CD4-positive, alpha-beta memory T cell (primary cell): ENCODE measurements at regions of chr1 and their contacts with region 1.

Region 1: GRCh38 chr1:150149271-150150132 is at the start of gene PLEKHO1:
- DNase-seq: peak; percentile 72 to 92 (median 79)
- H3K4me3 ChIP-seq: peak within 1 kb of the TSS; percentile 77 to 87
- H3K4me3 Mint-ChIP-seq: peak within 1 kb of the TSS; percentile 94 to 99 (median 98)
- H3K27ac ChIP-seq: peak within 1 kb of the TSS; percentile 81
- H3K27ac Mint-ChIP-seq: peak within 1 kb of the TSS; percentile 95 to 99 (median 98)
- H3K4me1 ChIP-seq: peaks cover 52% of the 10 kb centered on the region
- H3K4me1 Mint-ChIP-seq: peaks cover 53 to 83% (median 68%) of the 10 kb centered on the region in 4 donors
- H3K27me3 ChIP-seq: no peaks in the 10 kb centered on the region
- H3K27me3 Mint-ChIP-seq: no peaks in the 10 kb centered on the region
- total RNA-seq, gene PLEKHO1: 154 TPM

Region 2: GRCh38 chr1:150067184-150068036 is 82.1 kb before region 1 on chr1 and contains the start of gene VPS45:
- CTCF ChIA-PET with region 1: interaction called, 574 read pairs
- POLR2A ChIA-PET with region 1: interaction called, 100 read pairs
- intact Hi-C with region 1: loop called (anchors 1 kb)
- DNase-seq: peak; percentile 69 to 82 (median 75)
- H3K4me3 ChIP-seq: peak within 1 kb of the TSS; percentile 70 to 88
- H3K4me3 Mint-ChIP-seq: peak within 1 kb of the TSS; percentile 91 to 98 (median 96)
- H3K27ac ChIP-seq: peak within 1 kb of the TSS; percentile 65
- H3K27ac Mint-ChIP-seq: peak within 1 kb of the TSS; percentile 91 to 97 (median 94)
- H3K4me1 ChIP-seq: peaks cover 30% of the 10 kb centered on the region
- H3K4me1 Mint-ChIP-seq: peaks cover 27 to 42% (median 35%) of the 10 kb centered on the region in 4 donors
- H3K27me3 ChIP-seq: no peaks in the 10 kb centered on the region
- H3K27me3 Mint-ChIP-seq: no peaks in the 10 kb centered on the region
- total RNA-seq, gene VPS45: 32.1 to 38.5 TPM

Region 3: GRCh38 chr1:150093805-150094204 is 55.7 kb before region 1 on chr1:
- CTCF ChIA-PET with region 1: no interaction called
- POLR2A ChIA-PET with region 1: interaction called, 30 read pairs
- intact Hi-C with region 1: no loop called
- DNase-seq: no peak
- H3K4me3 ChIP-seq: no peak overlapping the region
- H3K4me3 Mint-ChIP-seq: no peak overlapping the region
- H3K27ac ChIP-seq: no peak overlapping the region
- H3K27ac Mint-ChIP-seq: peak overlapping the region in 2 of 7 donors; percentile 2 to 42
- H3K4me1 ChIP-seq: peaks cover 46% of the 10 kb centered on the region
- H3K4me1 Mint-ChIP-seq: peaks cover 22 to 36% (median 25%) of the 10 kb centered on the region in 4 donors
- H3K27me3 ChIP-seq: no peaks in the 10 kb centered on the region
- H3K27me3 Mint-ChIP-seq: no peaks in the 10 kb centered on the region

Region 4: DNA sequence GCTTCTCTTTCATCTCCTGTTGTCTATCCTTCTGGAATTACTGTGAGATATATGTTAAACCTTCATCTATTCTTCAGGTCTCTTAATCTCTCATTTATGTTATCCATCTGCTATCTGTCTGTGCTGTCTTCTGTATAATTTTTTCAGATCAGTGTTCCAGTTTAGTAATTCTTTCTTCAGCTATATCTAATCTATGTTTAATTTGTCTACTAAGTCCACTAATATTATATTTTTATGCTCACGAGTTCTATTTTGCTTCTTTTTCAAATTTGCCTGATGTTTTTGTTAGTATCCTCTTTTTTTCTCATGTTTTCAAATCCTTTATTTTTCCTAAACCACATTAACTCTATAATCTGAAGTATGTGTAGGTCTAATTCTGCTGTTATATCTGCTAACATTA is 34.4 kb before region 1 on chr1:
- CTCF ChIA-PET with region 1: interaction called, 3 read pairs
- POLR2A ChIA-PET with region 1: interaction called, 179 read pairs
- intact Hi-C with region 1: loop called (anchors 1 kb)
- DNase-seq: no peak
- H3K4me3 ChIP-seq: no peak overlapping the region
- H3K4me3 Mint-ChIP-seq: peak overlapping the region in 3 of 8 donors; percentile 21 to 52 (median 52)
- H3K27ac ChIP-seq: no peak overlapping the region
- H3K27ac Mint-ChIP-seq: peak overlapping the region in 4 of 7 donors; percentile 35 to 74 (median 67)
- H3K4me1 ChIP-seq: peaks cover 32% of the 10 kb centered on the region
- H3K4me1 Mint-ChIP-seq: peaks cover 33 to 60% (median 45%) of the 10 kb centered on the region in 4 donors
- H3K27me3 ChIP-seq: no peaks in the 10 kb centered on the region
- H3K27me3 Mint-ChIP-seq: no peaks in the 10 kb centered on the region

Region 5: DNA sequence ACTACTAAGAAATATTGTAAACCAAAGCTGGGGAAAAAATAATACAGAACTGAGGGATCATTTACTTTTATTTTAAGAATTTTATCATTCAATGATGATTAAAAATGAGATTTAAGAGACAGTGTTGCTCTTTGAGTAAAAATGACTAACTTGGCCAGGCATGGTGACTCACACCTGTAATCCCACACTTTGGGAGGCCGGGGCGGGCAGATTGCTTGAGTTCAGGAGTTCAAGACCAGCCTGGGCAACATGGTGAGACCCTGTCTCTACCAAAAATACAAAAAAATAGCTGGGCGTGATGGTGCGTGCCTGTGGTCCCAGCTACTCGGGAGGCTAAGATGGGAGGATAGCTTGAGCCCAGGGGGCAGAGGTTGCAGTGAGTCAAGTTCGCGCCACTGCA is 21.6 kb before region 1 on chr1:
- CTCF ChIA-PET with region 1: no interaction called
- POLR2A ChIA-PET with region 1: interaction called, 24 read pairs
- intact Hi-C with region 1: no loop called
- DNase-seq: no peak
- H3K4me3 ChIP-seq: no peak overlapping the region
- H3K4me3 Mint-ChIP-seq: no peak overlapping the region
- H3K27ac ChIP-seq: no peak overlapping the region
- H3K27ac Mint-ChIP-seq: peak overlapping the region in 2 of 7 donors; percentile 47 to 64
- H3K4me1 ChIP-seq: peaks cover 7% of the 10 kb centered on the region
- H3K4me1 Mint-ChIP-seq: peaks cover 11 to 17% (median 14%) of the 10 kb centered on the region in 4 donors
- H3K27me3 ChIP-seq: no peaks in the 10 kb centered on the region
- H3K27me3 Mint-ChIP-seq: no peaks in the 10 kb centered on the region

Region 6: GRCh38 chr1:150176593-150176992 is 27.1 kb after region 1 on chr1:
- CTCF ChIA-PET with region 1: no interaction called
- POLR2A ChIA-PET with region 1: no interaction called
- intact Hi-C with region 1: no loop called
- DNase-seq: no peak
- H3K4me3 ChIP-seq: no peak overlapping the region
- H3K4me3 Mint-ChIP-seq: no peak overlapping the region
- H3K27ac ChIP-seq: no peak overlapping the region
- H3K27ac Mint-ChIP-seq: no peak overlapping the region
- H3K4me1 ChIP-seq: no peaks in the 10 kb centered on the region
- H3K4me1 Mint-ChIP-seq: no peaks in the 10 kb centered on the region
- H3K27me3 ChIP-seq: no peaks in the 10 kb centered on the region
- H3K27me3 Mint-ChIP-seq: no peaks in the 10 kb centered on the region

Region 7: DNA sequence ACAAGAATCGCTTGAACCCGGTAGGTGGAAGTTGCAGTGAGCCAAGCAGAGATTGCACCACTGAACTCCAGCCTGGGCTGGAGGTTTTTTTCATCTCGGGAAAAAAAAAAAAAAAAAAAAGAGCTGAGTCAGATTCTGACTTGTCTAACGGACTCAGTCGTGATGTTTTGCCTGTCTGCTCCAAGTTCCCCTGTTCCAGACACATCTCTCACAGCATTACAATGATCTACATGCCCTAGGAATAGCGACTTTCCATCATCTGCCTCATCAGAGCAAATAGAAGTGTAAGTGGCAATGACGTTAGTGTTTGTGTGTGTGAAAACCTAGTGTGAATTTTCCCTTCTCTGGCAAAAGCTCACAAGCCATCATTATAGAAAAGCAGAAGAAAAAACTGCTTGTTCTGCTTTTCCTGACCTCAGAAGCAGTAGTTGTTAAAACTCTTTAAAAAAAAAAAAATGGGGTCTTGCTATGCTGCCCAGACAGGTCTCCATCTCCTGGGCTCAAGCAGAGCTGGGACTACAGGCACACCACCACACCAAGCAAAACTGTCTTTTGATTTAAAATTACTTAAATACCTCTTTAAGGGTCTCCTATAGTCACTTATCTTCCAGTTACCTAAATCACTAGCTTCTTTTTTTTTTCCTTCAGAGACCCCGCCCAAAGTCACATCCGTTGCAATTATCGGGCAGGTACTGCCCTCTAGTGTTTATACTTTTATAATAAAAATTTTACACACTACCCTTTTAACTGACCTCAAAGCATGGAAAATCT is 37.5 kb after region 1 on chr1:
- CTCF ChIA-PET with region 1: interaction called, 13 read pairs
- POLR2A ChIA-PET with region 1: interaction called, 17 read pairs
- intact Hi-C with region 1: no loop called
- DNase-seq: peak; percentile 42 to 71 (median 65)
- H3K4me3 ChIP-seq: no peak overlapping the region
- H3K4me3 Mint-ChIP-seq: peak overlapping the region in 7 of 8 donors; percentile 1 to 65 (median 44)
- H3K27ac ChIP-seq: no peak overlapping the region
- H3K27ac Mint-ChIP-seq: peak overlapping the region in 4 of 7 donors; percentile 19 to 85 (median 70)
- H3K4me1 ChIP-seq: peaks cover 8% of the 10 kb centered on the region
- H3K4me1 Mint-ChIP-seq: peaks cover 5 to 13% (median 8%) of the 10 kb centered on the region in 4 donors
- H3K27me3 ChIP-seq: no peaks in the 10 kb centered on the region
- H3K27me3 Mint-ChIP-seq: no peaks in the 10 kb centered on the region

Region 8: DNA sequence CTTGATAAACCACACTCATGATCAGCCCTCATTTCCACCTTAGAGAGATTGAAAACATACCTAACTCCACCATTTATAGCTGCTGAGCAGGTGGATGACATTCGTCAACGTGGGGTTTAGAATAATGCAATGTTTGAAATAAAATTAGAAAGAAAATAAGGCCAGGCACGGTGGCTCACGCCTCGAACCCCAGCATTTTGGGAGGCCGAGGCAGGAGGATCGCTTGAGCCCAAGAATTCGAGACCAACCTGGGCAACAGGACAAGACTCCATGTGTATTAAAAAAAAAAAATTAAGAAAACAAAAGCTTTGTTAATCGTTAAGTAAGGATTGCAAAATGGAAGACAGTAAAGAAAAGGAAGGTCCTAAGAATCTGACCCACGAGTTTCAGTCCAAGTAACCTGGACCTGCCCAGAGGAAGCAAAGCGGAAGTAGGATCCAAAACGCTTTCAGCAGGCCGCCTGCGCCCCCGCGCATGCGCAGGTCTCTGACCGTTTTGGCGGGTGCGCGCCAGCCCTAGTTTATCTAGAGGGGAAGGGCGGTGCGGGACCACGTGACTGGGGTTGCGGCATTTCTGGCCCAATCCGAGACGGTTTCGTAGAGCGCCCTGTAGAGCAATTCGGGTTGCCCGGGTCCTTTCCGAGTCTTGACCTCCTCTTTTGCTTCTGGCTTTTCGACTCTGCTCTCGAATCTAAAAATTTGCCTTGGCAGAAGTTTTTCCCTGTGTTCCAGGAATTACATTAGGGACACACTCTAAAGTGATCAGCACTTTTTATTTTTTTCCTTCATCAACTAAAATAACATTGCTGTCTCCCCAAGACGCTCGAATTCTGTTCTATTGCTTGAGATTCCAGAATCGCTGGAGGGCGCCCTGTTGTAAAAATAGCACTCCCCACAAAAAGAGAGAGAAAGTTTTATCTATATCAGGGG is 63.9 kb after region 1 on chr1:
- CTCF ChIA-PET with region 1: no interaction called
- POLR2A ChIA-PET with region 1: no interaction called
- intact Hi-C with region 1: no loop called
- DNase-seq: peak; percentile 87 to 92 (median 89)
- H3K4me3 ChIP-seq: peak overlapping the region; percentile 39 to 42
- H3K4me3 Mint-ChIP-seq: peak overlapping the region; percentile 86 to 95 (median 92)
- H3K27ac ChIP-seq: peak overlapping the region; percentile 67
- H3K27ac Mint-ChIP-seq: peak overlapping the region; percentile 89 to 99 (median 97)
- H3K4me1 ChIP-seq: peaks cover 12% of the 10 kb centered on the region
- H3K4me1 Mint-ChIP-seq: peaks cover 8 to 18% (median 14%) of the 10 kb centered on the region in 4 donors
- H3K27me3 ChIP-seq: no peaks in the 10 kb centered on the region
- H3K27me3 Mint-ChIP-seq: no peaks in the 10 kb centered on the region